ENCODE measurements at regions of chr1 and their contacts with region 1.

Region 1: GRCh38 chr1:231866392-231867331 is 240.1 kb downstream of the DISC1 start:
- DNase-seq: peak; percentile 13
- H3K4me3 Mint-ChIP-seq: no peak overlapping the region
- H3K27ac Mint-ChIP-seq: no peak overlapping the region
- H3K4me1 Mint-ChIP-seq: peaks cover 6% of the 10 kb centered on the region
- H3K27me3 Mint-ChIP-seq: no peaks in the 10 kb centered on the region

Region 2: DNA sequence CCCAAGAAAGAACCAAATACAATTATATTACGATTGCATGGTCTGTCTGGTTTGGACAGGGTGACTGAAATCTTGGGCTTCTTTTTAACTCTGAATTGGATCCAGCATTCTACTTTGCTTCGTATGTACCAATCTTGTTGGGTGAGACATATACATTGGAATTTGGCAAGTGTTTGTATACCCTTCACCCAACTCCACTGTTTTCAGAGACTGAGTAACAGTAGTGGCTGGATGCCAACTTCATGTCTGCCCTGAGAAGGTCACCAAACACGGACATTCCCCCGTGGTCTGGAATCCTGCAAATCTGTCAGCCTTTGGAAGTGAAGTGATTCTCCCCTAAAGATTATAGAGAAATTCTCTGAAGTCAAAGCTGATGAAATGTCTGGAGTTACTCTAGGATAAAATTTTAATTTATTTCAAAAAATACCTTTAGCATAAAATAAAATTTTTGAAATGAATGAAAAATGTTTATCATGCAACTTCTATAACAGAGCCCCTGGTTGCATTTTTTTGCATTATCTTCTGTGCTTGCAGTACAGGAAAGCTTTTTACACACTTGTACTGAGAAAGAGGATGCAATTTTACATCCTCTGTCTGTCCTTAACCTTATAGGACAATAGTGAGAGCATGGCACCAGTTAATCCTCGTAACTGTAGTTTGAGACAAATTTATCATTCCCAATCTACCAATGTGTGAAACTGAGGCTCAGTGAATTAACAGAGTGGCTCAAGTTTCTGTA is 38.3 kb before region 1 on chr1:
- intact Hi-C with region 1: no loop called
- DNase-seq: no peak
- H3K4me3 Mint-ChIP-seq: no peak overlapping the region
- H3K27ac Mint-ChIP-seq: no peak overlapping the region
- H3K4me1 Mint-ChIP-seq: no peaks in the 10 kb centered on the region
- H3K27me3 Mint-ChIP-seq: no peaks in the 10 kb centered on the region

Region 3: DNA sequence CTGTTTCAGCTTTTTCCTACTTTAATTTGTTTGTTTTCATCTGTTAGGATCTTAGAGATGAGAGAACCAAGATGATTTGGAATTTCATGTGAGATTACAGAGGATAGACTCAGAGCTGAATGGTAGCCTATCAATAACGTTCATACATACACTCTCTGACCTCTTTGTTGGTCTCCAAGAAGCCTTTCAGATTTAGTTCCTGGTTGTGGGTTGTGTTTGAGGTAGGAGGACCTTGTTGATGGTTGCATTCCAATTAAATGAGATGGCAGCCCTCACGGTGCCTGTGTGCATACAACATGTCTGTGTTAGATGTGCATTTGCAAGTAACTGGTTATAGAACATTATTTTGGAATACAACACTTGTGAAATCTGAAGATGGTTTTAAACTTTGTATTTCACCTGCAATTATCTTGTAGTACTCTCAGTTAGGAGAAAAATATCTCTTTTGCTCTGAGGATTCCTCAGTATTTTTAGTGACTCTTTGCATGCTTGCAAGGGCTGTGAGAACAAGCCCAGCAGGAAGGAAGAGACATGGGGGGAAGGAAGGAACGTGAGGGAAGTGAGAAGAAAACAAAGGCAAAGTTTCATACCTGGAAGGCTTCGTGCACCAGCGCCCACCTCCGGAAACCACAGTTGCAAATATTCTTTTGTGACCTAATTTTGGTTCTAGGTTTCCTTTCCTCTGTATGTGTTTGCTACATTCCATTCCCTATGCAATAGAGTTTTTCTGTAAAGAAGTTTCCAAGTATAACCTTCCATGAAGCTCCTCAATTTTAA is 51.8 kb after region 1 on chr1:
- intact Hi-C with region 1: loop called (anchors 2 kb)
- DNase-seq: peak; percentile 8
- H3K4me3 Mint-ChIP-seq: peak overlapping the region; percentile 48
- H3K27ac Mint-ChIP-seq: no peak overlapping the region
- H3K4me1 Mint-ChIP-seq: peaks cover 53% of the 10 kb centered on the region
- H3K27me3 Mint-ChIP-seq: peaks cover 22% of the 10 kb centered on the region

Region 4: GRCh38 chr1:231983588-231984193 is 117.0 kb after region 1 on chr1:
- intact Hi-C with region 1: loop called (anchors 5 kb)
- DNase-seq: no peak
- H3K4me3 Mint-ChIP-seq: no peak overlapping the region
- H3K27ac Mint-ChIP-seq: no peak overlapping the region
- H3K4me1 Mint-ChIP-seq: no peaks in the 10 kb centered on the region
- H3K27me3 Mint-ChIP-seq: peaks cover 3% of the 10 kb centered on the region

Region 5: GRCh38 chr1:232047474-232047873 is 180.8 kb after region 1 on chr1:
- intact Hi-C with region 1: loop called (anchors 10 kb)
- DNase-seq: no peak
- H3K4me3 Mint-ChIP-seq: no peak overlapping the region
- H3K27ac Mint-ChIP-seq: no peak overlapping the region
- H3K4me1 Mint-ChIP-seq: no peaks in the 10 kb centered on the region
- H3K27me3 Mint-ChIP-seq: peaks cover 2% of the 10 kb centered on the region